SK-N-SH (cell line): ENCODE measurements at regions of chr14 and their contacts with region 1.

Region 1: GRCh38 chr14:104794641-104795467 is 694 bp downstream of the AKT1 start:
- DNase-seq: peak; percentile 82
- H3K4me3 ChIP-seq: peak overlapping the region; percentile 79 to 84
- H3K27ac ChIP-seq: peak overlapping the region; percentile 58 to 70; a peak in 3 of 4 replicates
- H3K4me1 ChIP-seq: peaks cover 6 to 45% of the 10 kb centered on the region in 2 experiments; a peak in 3 of 4 replicates
- H3K27me3 ChIP-seq: no peaks in the 10 kb centered on the region
- CTCF ChIP-seq: peak; percentile 14
- EP300 ChIP-seq: no peak
- RAD21 ChIP-seq: no peak

Region 2: DNA sequence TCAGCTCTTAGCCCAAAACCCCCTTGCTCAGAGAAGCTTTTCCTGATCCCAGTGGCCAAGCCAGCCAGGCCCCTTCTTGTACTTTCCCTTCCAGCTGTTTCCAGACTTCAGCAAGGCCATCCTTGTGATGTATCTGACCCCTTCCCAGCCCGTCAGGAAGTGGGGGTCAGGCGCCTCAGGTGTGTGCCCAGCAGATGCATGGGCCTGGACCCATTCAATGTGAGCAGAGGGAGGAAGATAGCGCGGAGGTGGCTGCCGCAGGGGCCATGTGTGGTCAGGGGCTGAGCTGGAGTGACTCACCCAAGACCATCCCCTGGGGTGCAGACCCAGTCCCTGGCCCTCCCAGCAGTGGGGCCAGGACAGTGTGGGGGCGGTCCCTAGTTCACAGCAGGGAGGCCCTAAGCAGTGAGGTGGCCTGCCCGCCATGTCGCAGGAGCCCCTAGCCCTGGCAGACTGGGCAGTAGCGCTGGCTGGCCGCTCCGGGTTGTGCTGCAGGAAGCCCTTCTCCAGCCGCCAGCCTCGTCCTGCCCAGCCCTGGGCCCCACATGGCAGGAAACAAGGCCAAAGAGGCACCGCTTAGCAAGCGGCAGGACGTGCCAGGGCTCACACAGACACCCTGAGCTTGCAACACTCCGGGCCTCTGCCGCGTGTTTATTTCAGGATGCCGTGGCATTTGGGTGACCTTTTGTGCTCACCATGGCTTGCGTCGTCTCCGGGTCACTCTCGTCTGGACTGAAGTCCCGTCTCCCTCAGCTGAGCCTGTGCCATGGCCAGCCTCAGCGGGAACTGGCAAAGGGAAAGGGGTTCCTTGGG is 58.8 kb before region 1 on chr14:
- CTCF ChIA-PET with region 1: no interaction called
- POLR2A ChIA-PET with region 1: no interaction called
- DNase-seq: peak; percentile 60
- H3K4me3 ChIP-seq: no peak overlapping the region
- H3K27ac ChIP-seq: peak overlapping the region in 1 of 2 experiments; percentile 16; a peak in 1 of 4 replicates
- H3K4me1 ChIP-seq: peaks cover 0 to 6% of the 10 kb centered on the region in 2 experiments; a peak in 1 of 4 replicates
- H3K27me3 ChIP-seq: no peaks in the 10 kb centered on the region
- CTCF ChIP-seq: no peak
- EP300 ChIP-seq: no peak
- RAD21 ChIP-seq: no peak

Region 3: DNA sequence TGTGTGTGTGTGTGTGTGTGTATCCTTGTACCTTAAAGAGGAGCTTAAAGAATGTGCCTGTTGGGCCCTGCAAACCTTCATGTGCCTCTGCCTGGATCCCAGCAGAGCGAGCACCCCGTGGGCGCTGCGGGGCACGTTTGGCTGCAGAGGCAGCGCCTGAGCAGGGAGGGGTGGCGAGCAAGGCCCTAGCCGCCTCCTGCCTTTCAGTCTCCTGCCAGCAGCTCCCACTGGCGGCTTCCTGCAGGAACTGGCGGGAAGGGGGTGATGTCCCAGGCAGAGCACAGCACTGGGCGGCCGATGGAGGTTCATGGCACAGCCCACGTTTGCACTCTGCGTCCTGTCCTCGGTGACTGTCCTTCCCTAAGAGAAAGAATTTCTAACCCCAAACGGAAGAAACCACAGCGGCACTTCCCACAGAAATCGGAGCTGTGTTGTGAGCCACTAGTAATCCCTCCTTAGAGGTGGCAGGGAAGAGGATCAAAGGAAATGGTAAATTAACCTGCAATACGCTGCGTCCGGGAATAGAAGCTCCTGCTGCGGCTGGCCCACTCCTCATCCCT is 25.9 kb after region 1 on chr14:
- CTCF ChIA-PET with region 1: interaction called, 26 read pairs
- POLR2A ChIA-PET with region 1: interaction called, 3 read pairs
- DNase-seq: peak; percentile 92
- H3K4me3 ChIP-seq: no peak overlapping the region
- H3K27ac ChIP-seq: no peak overlapping the region
- H3K4me1 ChIP-seq: peaks cover 0 to 5% of the 10 kb centered on the region in 2 experiments; a peak in 1 of 4 replicates
- H3K27me3 ChIP-seq: no peaks in the 10 kb centered on the region
- CTCF ChIP-seq: peak; percentile 41
- EP300 ChIP-seq: peak in 1 of 2 experiments; percentile 56; a peak in 1 of 4 replicates
- RAD21 ChIP-seq: peak; percentile 67